ENCODE measurements at regions of chr5 and their contacts with region 1.

Region 1: DNA sequence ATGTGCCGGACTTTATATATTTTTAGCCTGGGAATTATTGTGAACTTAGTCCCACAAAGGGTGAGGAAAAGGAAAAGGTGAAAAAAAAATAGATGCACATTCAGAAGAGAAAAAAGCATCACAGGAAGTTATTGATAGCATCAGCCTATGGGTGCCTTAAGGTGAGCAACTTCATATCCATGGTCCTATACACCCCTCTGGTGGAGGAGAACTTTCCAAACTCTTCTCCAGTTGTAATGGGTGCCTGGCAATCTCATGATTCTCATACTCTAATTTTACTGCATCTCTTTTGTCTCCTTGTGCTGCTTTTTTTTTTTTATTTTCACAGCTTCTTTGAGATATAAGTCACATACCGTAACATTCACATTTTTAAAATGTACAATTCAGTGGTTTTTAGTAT is 107.4 kb downstream of the JAKMIP2 start:
- DNase-seq: peak; percentile 48
- ATAC-seq: peak; percentile 81
- H3K4me3 ChIP-seq: no peak overlapping the region
- H3K27ac ChIP-seq: no peak overlapping the region
- H3K4me1 ChIP-seq: no peaks in the 10 kb centered on the region
- H3K27me3 ChIP-seq: peaks cover 15% of the 10 kb centered on the region
- CTCF ChIP-seq: peak; percentile 44; the same call in 1 of the 2 replicates

Region 2: GRCh38 chr5:147822686-147823491 is 147.7 kb after region 1 on chr5:
- CTCF ChIA-PET with region 1: interaction called, 5 read pairs
- POLR2A ChIA-PET with region 1: no interaction called
- intact Hi-C with region 1: loop called (anchors 1 kb)
- DNase-seq: peak; percentile 90
- ATAC-seq: peak; percentile 71
- H3K4me3 ChIP-seq: no peak overlapping the region
- H3K27ac ChIP-seq: no peak overlapping the region
- H3K4me1 ChIP-seq: peaks cover 16% of the 10 kb centered on the region
- H3K27me3 ChIP-seq: no peaks in the 10 kb centered on the region
- CTCF ChIP-seq: peak; percentile 99

Region 3: GRCh38 chr5:147869112-147869511 is 193.9 kb after region 1 on chr5:
- CTCF ChIA-PET with region 1: no interaction called
- POLR2A ChIA-PET with region 1: no interaction called
- intact Hi-C with region 1: no loop called
- DNase-seq: no peak
- ATAC-seq: no peak; the same call in 1 of the 2 replicates
- H3K4me3 ChIP-seq: no peak overlapping the region
- H3K27ac ChIP-seq: peak overlapping the region; percentile 4; the same call in 1 of the 2 replicates
- H3K4me1 ChIP-seq: peaks cover 5% of the 10 kb centered on the region; the same call in 1 of the 2 replicates
- H3K27me3 ChIP-seq: no peaks in the 10 kb centered on the region
- CTCF ChIP-seq: no peak

Measured in PC-3 (cell line).